ENCODE measurements at regions of chr10 and their contacts with region 1.

Region 1: GRCh38 chr10:97334370-97335175 is at the start of gene FRAT2:
- DNase-seq: peak; percentile 93
- H3K4me3 ChIP-seq: peak within 1 kb of the TSS; percentile 75
- H3K27ac ChIP-seq: peak within 1 kb of the TSS; percentile 100
- H3K4me1 ChIP-seq: peaks cover 18% of the 10 kb centered on the region
- H3K27me3 ChIP-seq: no peaks in the 10 kb centered on the region
- CTCF ChIP-seq: no peak
- total RNA-seq, gene FRAT2: 4.7 and 6.1 TPM in 2 replicates

Region 2: GRCh38 chr10:97278491-97278989 is 56.0 kb before region 1 on chr10:
- CTCF ChIA-PET with region 1: interaction called, 14 read pairs
- POLR2A ChIA-PET with region 1: no interaction called
- intact Hi-C with region 1: loop called (anchors 5 kb)
- DNase-seq: peak; percentile 80
- H3K4me3 ChIP-seq: no peak overlapping the region
- H3K27ac ChIP-seq: peak overlapping the region; percentile 80
- H3K4me1 ChIP-seq: peaks cover 21% of the 10 kb centered on the region
- H3K27me3 ChIP-seq: no peaks in the 10 kb centered on the region
- CTCF ChIP-seq: peak; percentile 69

Region 3: DNA sequence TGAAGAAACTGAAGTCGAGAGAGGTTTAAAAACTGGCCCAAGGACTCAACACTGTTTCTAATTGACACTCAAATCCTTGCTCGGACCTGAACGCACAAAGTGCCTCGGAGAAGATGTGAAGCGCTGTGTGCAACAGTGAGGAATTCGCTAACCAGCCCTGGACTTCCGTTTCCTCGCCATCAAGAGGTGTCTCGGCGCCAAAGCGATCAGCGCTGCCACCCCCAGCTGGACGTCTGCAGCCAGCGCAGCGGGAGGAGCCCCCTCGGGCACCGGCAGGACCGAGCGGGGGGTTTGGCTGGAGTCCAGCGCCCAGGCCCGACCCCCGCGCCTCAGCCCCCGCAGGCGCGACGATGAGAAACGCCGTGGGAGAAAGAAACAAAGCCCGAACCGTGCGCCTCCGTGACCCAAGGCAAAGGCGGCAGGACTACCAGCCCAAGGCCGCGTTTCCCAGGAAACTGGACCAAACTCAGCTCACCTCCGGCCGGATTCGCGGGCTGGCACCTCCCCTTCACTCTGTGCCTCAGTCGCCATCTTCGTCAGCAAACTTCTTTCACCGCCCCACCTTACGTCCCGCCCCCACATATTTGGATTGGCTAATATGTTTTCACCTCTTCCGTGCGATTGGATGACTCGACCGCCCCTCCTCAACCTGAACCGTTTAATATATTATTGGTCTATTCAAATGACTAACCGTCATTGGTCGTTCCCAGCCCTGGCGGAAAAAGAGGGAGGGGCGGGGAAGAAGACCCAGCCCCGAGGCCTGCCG is 42.3 kb before region 1 on chr10 and contains the start of gene ARHGAP19:
- CTCF ChIA-PET with region 1: no interaction called
- POLR2A ChIA-PET with region 1: no interaction called
- intact Hi-C with region 1: loop called (anchors 2 kb)
- DNase-seq: peak; percentile 99
- H3K4me3 ChIP-seq: peak within 1 kb of the TSS; percentile 79
- H3K27ac ChIP-seq: peak within 1 kb of the TSS; percentile 95
- H3K4me1 ChIP-seq: no peaks in the 10 kb centered on the region
- H3K27me3 ChIP-seq: no peaks in the 10 kb centered on the region
- CTCF ChIP-seq: no peak
- total RNA-seq, gene ARHGAP19: 59.0 and 66.2 TPM in 2 replicates

Region 4: DNA sequence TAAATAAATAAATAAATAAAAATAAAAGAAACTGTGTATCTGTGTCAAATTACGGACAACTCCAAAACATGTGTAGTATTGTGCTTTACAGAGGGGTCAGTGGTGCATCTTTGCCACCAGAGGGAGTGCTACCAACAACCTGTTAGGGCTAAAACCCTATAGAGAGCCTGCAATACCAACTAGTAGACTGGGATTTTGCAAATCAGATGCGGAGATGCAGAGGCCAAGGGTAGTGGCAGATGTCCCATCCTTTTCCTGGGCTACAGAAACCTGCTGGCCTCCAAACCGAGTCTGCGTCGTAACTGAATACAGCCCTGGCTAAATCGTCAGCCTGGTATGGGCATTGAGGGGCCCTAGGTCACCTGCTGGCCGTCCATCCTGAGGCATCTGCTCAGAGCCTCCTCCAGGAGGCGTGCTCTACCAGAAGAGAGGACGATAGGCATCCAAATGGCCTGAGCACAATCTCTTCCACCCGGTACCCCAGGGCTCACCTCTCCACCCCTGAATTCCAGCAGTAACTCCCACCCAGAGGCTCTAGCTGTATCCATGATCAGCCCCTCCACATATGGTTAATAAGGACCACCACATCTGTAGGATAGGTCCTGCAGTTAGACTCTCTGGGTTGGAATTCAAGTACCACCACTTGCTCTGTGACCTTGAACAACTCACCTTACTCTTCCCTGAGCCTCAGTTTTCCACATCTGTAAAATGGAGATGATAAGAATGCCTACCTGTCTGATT is 72.8 kb after region 1 on chr10:
- CTCF ChIA-PET with region 1: no interaction called
- POLR2A ChIA-PET with region 1: no interaction called
- intact Hi-C with region 1: no loop called
- DNase-seq: peak; percentile 89
- H3K4me3 ChIP-seq: peak overlapping the region; percentile 20
- H3K27ac ChIP-seq: no peak overlapping the region
- H3K4me1 ChIP-seq: no peaks in the 10 kb centered on the region
- H3K27me3 ChIP-seq: no peaks in the 10 kb centered on the region
- CTCF ChIP-seq: peak; percentile 82